Mammary epithelial cell (primary cell): ENCODE measurements at regions of chr4 and their contacts with region 1.

Region 1: DNA sequence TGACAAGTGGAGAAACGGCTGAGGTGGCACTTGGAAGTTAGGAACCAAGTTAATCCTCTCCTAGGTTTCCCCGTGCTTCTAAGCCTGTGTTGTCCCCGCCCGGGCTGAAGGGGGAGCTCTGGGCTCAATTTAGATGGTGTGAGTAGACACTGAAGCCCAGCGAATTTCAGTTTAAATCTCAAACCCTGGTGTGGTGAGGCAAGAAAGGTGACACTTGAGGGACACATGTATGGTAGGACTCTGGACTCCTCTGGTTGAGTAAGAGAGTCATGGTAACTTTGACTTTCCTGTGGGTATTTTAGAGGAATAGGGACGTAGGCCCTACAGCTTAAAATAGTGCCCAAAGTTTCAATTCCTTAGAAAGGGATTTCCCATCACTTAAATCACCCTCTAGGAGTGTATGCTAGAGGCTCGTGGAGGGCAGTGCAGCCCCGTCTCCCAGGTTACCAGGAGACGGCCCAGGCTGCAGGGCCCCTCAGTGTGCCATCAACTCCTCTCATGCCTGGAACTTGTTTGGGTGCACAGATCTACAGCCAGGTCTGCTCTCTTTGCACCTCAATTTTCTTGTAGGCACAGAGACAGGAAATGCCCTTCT is 24.0 kb downstream of the HAND2 start:
- DNase-seq: no peak
- H3K4me3 ChIP-seq: no peak overlapping the region
- H3K27ac ChIP-seq: no peak overlapping the region
- H3K4me1 ChIP-seq: no peaks in the 10 kb centered on the region
- H3K27me3 ChIP-seq: peaks cover 21% of the 10 kb centered on the region
- CTCF ChIP-seq: peak; percentile 68 to 84

Region 2: DNA sequence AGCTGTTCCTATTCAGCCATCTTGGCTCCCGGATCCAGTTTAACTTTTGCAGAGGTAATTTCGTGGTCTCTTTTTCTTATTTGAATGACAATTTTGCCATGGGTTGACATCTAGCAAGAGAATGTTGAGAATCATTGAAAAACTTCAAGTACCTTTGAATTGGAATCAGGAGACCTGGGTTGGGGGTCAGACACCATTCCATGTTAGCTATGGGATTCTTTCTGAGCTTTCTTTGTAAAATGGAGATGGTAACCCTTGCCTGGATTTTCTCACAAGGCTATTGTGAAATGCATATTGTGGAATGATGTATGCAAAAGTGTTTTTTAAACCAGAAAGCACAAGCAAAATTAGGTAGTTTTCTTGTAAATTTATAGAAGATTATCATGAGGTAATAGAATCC is 103.1 kb after region 1 on chr4:
- CTCF ChIA-PET with region 1: no interaction called
- dilution Hi-C with region 1: no loop called
- in situ Hi-C with region 1: no loop called
- intact Hi-C with region 1: no loop called
- DNase-seq: no peak
- H3K4me3 ChIP-seq: no peak overlapping the region
- H3K27ac ChIP-seq: no peak overlapping the region
- H3K4me1 ChIP-seq: no peaks in the 10 kb centered on the region
- H3K27me3 ChIP-seq: no peaks in the 10 kb centered on the region
- CTCF ChIP-seq: no peak

Region 3: GRCh38 chr4:173748353-173748752 is 242.3 kb after region 1 on chr4:
- CTCF ChIA-PET with region 1: no interaction called
- dilution Hi-C with region 1: no loop called
- in situ Hi-C with region 1: no loop called
- intact Hi-C with region 1: loop called (anchors 5 kb)
- DNase-seq: no peak
- H3K4me3 ChIP-seq: no peak overlapping the region
- H3K27ac ChIP-seq: no peak overlapping the region
- H3K4me1 ChIP-seq: no peaks in the 10 kb centered on the region
- H3K27me3 ChIP-seq: no peaks in the 10 kb centered on the region
- CTCF ChIP-seq: peak in 1 of 2 donors; percentile 36

Region 4: GRCh38 chr4:173990126-173990868 is 484.3 kb after region 1 on chr4:
- CTCF ChIA-PET with region 1: no interaction called
- dilution Hi-C with region 1: no loop called
- in situ Hi-C with region 1: no loop called
- intact Hi-C with region 1: loop called (anchors 5 kb)
- DNase-seq: peak; percentile 8
- H3K4me3 ChIP-seq: no peak overlapping the region
- H3K27ac ChIP-seq: no peak overlapping the region
- H3K4me1 ChIP-seq: no peaks in the 10 kb centered on the region
- H3K27me3 ChIP-seq: no peaks in the 10 kb centered on the region
- CTCF ChIP-seq: peak; percentile 51 to 62

Region 5: GRCh38 chr4:174120446-174121295 is 614.6 kb after region 1 on chr4:
- CTCF ChIA-PET with region 1: no interaction called
- dilution Hi-C with region 1: no loop called
- in situ Hi-C with region 1: no loop called
- intact Hi-C with region 1: loop called (anchors 1 kb)
- DNase-seq: peak; percentile 50
- H3K4me3 ChIP-seq: peak overlapping the region; percentile 37 to 48 (median 45)
- H3K27ac ChIP-seq: no peak overlapping the region
- H3K4me1 ChIP-seq: no peaks in the 10 kb centered on the region
- H3K27me3 ChIP-seq: peaks cover 4% of the 10 kb centered on the region
- CTCF ChIP-seq: peak; percentile 54 to 61

Region 6: DNA sequence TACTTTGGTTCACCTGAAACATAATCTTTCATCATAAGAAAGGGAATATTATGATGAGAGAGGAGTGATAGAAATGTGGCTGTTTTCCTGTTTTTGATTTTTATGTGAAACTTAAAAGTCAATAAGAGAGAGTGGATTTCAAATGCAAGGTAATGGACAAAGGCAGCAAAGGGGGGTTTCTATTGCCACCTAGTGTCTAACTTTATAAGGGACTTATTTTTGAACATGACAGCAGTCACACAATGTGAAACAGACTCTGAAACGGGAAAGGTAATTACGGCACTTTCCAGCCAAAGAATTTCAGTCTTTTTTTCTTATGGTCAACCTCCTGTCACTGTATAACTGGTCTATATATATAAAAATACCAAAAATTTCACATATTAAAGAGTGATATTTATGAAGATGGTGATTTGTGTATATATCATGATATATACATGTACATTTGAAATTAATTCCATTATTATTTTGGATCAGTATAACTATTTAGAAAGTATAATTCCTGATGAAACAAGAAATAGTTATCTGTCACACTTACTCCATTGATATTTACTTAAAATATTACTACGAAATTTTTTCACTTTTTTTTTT is 650.3 kb after region 1 on chr4:
- CTCF ChIA-PET with region 1: no interaction called
- dilution Hi-C with region 1: no loop called
- in situ Hi-C with region 1: no loop called
- intact Hi-C with region 1: loop called (anchors 1 kb)
- DNase-seq: peak; percentile 18
- H3K4me3 ChIP-seq: no peak overlapping the region
- H3K27ac ChIP-seq: no peak overlapping the region
- H3K4me1 ChIP-seq: no peaks in the 10 kb centered on the region
- H3K27me3 ChIP-seq: peaks cover 1% of the 10 kb centered on the region
- CTCF ChIP-seq: peak; percentile 66 to 70

Region 7: DNA sequence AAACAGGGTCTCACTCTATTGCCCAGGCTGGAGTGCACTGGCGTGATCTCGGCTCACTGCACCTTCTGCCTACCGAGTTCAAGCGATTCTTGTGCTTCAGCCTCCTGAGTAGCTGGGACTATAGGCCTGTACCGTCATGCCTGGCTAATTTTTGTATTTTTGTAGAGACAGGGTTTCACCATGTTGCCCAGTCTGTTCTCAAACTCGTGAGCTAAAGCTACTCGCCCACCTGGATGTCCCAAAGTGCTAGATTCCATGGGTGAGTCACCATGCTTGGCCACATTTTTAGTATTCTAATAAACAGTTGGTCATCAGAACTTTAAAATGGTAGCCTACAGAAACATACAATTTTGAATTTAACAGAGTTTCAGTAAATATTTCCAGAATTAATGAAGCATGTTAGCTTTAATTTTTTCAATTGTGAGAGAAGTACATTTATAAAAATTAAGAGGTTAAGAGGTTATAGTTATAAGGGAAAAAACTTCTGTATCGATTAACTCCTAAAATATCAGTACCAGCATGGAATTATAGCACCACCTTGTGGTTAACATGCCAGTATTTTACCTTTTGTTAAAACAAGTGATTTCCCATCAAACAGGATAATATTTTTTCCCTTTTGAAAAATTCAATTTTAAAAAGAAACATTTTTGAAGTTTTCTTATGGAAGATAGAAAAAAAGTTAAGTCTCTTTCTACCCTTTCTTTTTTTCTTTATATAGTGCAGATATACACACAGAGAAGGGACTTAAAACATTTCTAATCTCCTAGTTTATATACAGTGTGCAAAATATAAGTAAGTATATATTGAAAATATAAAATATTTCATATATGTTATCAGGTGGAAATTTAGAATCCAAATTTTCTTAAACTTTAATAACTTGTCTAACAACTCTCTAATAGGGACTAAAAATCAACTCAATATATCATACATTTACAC is 813.1 kb after region 1 on chr4:
- CTCF ChIA-PET with region 1: no interaction called
- dilution Hi-C with region 1: no loop called
- in situ Hi-C with region 1: no loop called
- intact Hi-C with region 1: loop called (anchors 5 kb)
- DNase-seq: peak; percentile 27
- H3K4me3 ChIP-seq: no peak overlapping the region
- H3K27ac ChIP-seq: no peak overlapping the region
- H3K4me1 ChIP-seq: peaks cover 10% of the 10 kb centered on the region
- H3K27me3 ChIP-seq: no peaks in the 10 kb centered on the region
- CTCF ChIP-seq: peak; percentile 64 to 69